CD4-positive, alpha-beta memory T cell (primary cell): ENCODE measurements at regions of chr2 and their contacts with region 1.

Region 1: DNA sequence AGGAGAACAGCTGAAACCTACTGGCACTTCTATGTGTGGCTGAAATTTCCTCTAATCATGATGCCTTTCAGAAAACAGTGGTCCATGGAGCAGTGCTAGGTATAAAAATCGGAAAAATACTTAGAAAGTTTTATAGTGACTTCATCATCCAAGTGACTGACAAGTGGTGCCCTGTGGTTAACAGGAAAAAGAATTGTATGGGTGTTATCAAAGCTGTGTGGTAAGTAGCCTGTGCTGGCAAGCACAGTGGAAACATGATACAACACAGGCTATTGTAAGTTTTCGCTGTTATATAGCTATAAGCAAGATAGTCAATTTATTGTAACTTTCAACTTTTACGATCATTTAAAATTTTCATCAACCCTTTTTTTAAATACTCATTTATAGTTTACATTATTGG is 1599.7 kb upstream of the ZEB2 start:
- DNase-seq: no peak
- H3K4me3 ChIP-seq: no peak overlapping the region
- H3K4me3 Mint-ChIP-seq: no peak overlapping the region
- H3K27ac ChIP-seq: no peak overlapping the region
- H3K27ac Mint-ChIP-seq: no peak overlapping the region
- H3K4me1 ChIP-seq: no peaks in the 10 kb centered on the region
- H3K4me1 Mint-ChIP-seq: no peaks in the 10 kb centered on the region
- H3K27me3 ChIP-seq: no peaks in the 10 kb centered on the region
- H3K27me3 Mint-ChIP-seq: no peaks in the 10 kb centered on the region

Region 2: DNA sequence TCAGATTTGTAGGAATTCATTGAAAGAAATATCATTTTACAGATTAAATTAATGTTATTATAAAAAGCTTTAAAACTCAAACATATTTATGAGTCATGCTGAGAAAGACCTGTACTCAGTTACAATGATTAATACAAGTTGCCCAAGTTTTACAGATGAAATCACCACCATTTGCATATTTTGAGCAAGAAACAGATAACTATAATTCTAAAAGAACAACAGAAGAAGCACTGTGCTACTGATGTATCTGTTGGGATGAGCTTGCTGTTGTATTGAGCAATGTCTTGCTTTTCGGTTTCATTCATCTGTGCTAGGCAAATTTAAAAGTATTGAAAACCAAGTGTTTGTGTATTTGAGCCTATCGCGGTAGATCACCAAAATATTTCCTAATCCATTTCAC is 10.6 kb before region 1 on chr2:
- CTCF ChIA-PET with region 1: no interaction called
- POLR2A ChIA-PET with region 1: no interaction called
- intact Hi-C with region 1: loop called (anchors 1 kb)
- DNase-seq: no peak
- H3K4me3 ChIP-seq: no peak overlapping the region
- H3K4me3 Mint-ChIP-seq: no peak overlapping the region
- H3K27ac ChIP-seq: no peak overlapping the region
- H3K27ac Mint-ChIP-seq: no peak overlapping the region
- H3K4me1 ChIP-seq: no peaks in the 10 kb centered on the region
- H3K4me1 Mint-ChIP-seq: no peaks in the 10 kb centered on the region
- H3K27me3 ChIP-seq: no peaks in the 10 kb centered on the region
- H3K27me3 Mint-ChIP-seq: no peaks in the 10 kb centered on the region